ENCODE measurements at regions of chr4 and their contacts with region 1.

Region 1: DNA sequence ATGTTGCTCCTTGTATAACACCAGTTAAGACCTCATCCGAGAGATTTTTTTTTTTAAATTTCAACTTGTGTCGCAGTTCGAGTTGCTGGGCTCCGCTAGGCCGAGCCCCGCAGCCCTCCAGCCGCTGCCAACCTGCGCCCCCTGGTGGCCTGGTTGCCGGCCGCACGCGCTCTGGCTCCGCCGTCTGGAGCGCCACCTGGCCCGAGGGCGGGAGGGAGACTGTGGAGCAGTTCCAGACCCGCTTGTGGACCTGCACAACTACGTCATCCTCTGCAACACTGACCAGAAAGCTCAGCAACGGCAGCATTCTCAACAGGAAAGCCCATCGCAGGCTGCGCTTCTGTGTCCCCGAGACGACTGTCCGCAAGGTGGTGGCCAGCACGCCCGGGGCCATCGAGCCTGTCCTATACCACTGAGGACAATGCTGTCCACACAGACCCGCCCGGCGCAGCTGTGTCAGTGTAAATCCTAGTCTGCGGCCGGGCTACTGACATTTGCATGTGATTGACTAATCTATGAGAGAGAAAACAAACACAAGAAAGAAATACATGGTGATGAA is 39.1 kb downstream of the ARL9 start:
- DNase-seq: peak; percentile 78
- H3K4me3 Mint-ChIP-seq: peak overlapping the region; percentile 68
- H3K27ac Mint-ChIP-seq: no peak overlapping the region
- H3K4me1 Mint-ChIP-seq: peaks cover 24% of the 10 kb centered on the region
- H3K27me3 Mint-ChIP-seq: peaks cover 15% of the 10 kb centered on the region

Region 2: GRCh38 chr4:56424697-56425514 is 119.7 kb before region 1 on chr4:
- intact Hi-C with region 1: loop called (anchors 1 kb)
- DNase-seq: no peak
- H3K4me3 Mint-ChIP-seq: no peak overlapping the region
- H3K27ac Mint-ChIP-seq: no peak overlapping the region
- H3K4me1 Mint-ChIP-seq: peaks cover 34% of the 10 kb centered on the region
- H3K27me3 Mint-ChIP-seq: no peaks in the 10 kb centered on the region

Region 3: DNA sequence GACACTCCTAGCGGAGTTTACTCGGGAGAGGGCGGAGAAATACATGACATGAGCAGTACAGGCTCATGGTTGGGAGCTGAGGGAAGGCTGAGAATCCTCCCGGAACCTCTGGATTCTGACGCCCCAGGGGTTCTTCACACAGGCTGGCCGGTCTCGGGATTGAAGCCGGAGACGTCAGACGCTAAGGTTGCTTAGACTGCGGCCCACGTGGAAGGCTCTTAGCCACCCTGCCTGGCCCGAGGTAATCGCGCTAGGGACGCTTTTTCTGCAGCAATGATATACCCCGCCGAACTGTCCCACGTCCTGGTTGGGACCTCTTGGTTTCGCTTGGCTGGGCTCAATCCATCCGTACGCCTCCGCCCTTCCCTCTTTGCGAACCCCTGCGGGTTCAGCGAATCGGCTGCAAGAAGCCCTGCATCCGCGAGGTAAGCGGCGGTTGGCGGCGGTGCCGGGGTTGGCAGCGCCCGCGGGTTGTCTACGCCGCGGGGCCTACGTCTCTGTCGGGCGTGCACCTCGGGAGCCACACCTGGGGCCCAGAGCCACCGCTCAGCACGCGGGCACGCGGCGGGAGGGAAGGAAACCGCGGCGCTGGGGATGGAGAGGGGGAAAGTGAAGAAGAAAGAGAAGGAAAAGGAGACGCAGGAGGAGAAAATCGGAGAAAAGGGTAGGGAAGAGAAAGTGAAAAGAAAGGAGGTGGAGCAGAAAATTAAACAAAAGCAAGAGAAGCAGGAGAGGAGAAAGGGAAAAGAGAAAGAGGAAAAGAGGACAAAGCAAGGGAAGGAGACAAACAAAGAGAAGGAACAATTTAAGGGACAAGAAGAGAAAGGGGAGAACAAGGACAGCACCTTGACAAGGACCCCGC is 39.2 kb before region 1 on chr4 and contains the start of gene ARL9:
- intact Hi-C with region 1: loop called (anchors 2 kb)
- DNase-seq: peak; percentile 38
- H3K4me3 Mint-ChIP-seq: peak within 1 kb of the TSS; percentile 88
- H3K27ac Mint-ChIP-seq: peak within 1 kb of the TSS; percentile 76
- H3K4me1 Mint-ChIP-seq: peaks cover 20% of the 10 kb centered on the region
- H3K27me3 Mint-ChIP-seq: peaks cover 13% of the 10 kb centered on the region
- total RNA-seq, gene ARL9: 0.13 and 0.32 TPM in 2 replicates

Measured in activated T-helper 1 cell treated with anti-CD3 and anti-CD28 coated beads, Interleukin-12 subunit alpha, Interleukin-12 subunit beta, Interleukin-2, Interleukin-4 antibody, amounts not matched to agents 30 ng/mL and 10 ng/mL and 1 ng/mL, durations not matched to agents 14 hours and 24 hours and 36 hours (primary cell).